Mucosa of descending colon (tissue), 3 donors: ENCODE measurements at regions of chr1 and their contacts with region 1.

Region 1: GRCh38 chr1:16055613-16056520 is 12.3 kb downstream of the CLCNKB start:
- DNase-seq: peak; percentile 87 to 95 (median 93)
- ATAC-seq: peak; percentile 94
- H3K4me3 ChIP-seq: no peak overlapping the region
- H3K4me1 ChIP-seq: peaks cover 4% of the 10 kb centered on the region
- CTCF ChIP-seq: peak; percentile 95

Region 2: DNA sequence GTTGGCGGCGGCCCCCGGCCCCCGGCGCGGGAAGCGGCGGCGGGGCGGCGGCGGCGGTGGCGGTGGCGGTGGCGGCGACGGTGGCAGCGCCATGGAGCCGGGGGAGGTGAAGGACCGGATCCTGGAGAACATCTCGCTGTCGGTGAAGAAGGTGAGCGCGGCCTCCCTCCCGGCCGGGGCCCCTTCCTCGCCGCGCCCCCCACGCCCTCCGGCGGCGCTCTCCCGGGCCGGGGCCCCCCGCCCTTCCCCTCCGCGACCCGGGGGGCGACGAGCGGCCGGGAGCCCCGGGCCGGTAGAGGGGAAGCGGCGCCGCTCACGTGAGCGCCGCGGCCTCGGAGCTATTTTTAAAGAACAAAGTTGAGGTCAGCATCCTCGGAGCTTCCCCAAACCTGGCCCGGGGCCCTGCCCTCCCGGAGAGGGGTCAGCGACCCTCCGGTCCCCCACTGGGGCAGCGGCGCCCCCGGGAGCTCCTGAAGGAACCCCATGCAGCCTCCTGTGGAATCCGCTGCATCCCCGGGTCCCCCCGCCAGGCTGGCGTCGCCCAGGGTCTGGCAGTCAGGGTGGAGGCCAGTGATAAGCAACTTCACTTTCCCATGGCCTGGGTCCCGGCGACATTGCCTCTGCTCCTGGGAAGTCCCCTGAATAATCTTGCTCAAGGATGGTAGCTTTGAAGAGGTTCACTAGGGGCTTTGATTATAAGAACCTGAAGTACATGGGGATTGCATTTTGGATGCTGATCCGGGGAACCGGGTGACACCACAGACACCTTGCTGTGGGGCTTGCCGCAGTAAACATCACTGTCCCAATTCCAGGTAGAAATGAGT is 371.2 kb before region 1 on chr1:
- intact Hi-C with region 1: no loop called
- DNase-seq: peak; percentile 44 to 67 (median 67)
- ATAC-seq: peak; percentile 45
- H3K4me3 ChIP-seq: peak overlapping the region; percentile 70
- H3K4me1 ChIP-seq: peaks cover 19% of the 10 kb centered on the region
- CTCF ChIP-seq: no peak

Region 3: DNA sequence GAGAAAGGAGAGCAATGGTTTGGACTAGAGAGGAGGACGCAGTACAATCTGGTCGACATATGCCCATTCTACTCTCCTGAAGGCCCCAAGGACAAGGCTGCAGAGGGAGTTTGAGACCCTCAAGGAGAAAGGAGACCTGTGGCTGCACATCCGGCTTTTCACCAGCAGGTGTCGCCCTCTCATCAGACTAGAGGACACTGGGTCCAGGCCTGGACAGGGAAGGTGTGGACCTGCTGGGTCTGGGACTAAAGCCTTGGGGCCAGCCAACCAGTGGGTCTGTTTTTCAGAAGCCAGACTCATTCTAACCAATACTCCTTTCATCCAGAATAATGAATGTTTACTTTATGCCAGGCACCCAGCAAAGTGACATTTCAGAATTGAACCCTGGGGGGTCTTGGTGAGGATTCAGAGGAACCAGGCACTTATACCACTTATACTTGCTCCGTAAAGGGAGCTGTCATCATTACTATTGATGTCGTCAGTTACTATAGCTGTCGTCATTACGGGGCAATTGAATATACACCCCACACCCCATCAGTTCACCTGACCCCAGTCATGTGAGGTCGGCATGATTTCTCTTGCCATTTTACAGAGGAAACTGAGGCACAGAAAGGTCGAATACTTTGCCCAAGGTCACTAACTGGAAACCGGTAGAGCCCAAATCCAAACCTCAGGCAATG is 46.7 kb before region 1 on chr1:
- intact Hi-C with region 1: loop called (anchors 2 to 10 kb)
- DNase-seq: peak in 2 of 3 donors; percentile 82 to 85
- ATAC-seq: peak; percentile 60
- H3K4me3 ChIP-seq: no peak overlapping the region
- H3K4me1 ChIP-seq: peaks cover 16% of the 10 kb centered on the region
- CTCF ChIP-seq: peak; percentile 88